Activated CD8-positive, alpha-beta T cell treated with anti-CD3 and anti-CD28 coated beads for 36 hours (primary cell): ENCODE measurements at regions of chr12 and their contacts with region 1.

Region 1: GRCh38 chr12:52879394-52880351 is 25.2 kb downstream of the KRT8 start:
- DNase-seq: peak; percentile 82
- ATAC-seq: peak; percentile 95
- H3K4me3 Mint-ChIP-seq: peak overlapping the region; percentile 54
- H3K27ac Mint-ChIP-seq: no peak overlapping the region
- H3K4me1 Mint-ChIP-seq: peaks cover 5% of the 10 kb centered on the region
- H3K27me3 Mint-ChIP-seq: peaks cover 6% of the 10 kb centered on the region
- CTCF ChIP-seq: peak; percentile 92

Region 2: DNA sequence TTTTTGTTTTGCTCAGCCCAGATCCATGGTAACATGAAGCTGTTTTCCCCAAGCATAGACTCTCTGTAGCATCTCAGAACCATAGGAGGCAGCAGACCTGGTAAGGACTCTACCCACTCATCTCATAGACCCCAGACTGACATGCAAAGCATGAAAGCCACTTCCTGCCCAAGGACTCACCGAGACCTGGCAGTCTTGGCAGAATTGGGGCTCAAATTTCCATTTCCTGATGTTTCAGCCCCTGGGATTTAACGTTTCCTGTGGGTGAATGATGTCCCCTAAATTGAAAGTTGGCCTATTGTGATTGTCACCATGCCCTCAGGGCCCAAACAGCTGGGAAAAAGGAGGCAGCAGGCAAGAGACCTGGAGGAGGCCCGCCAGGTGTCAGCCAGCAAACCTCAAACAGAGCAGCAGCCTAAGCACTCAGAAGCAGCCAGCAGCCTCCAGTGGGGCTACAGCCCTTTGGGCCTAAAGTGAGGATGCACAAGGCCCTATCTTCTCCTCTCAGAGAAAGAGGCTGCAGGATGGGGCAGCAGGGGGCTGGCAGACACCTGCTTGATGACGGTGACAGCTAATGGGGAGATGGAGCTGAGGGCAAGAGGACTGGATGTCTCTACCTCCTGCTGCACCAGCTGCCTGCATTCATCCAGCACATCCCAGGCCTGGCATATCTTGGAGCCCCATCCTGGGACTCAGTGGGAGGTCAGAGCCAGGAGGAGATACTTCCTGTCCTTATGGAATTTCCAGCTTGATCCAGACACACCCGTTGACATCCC is 520.9 kb before region 1 on chr12:
- CTCF ChIA-PET with region 1: interaction called, 10 read pairs
- POLR2A ChIA-PET with region 1: no interaction called
- intact Hi-C with region 1: no loop called
- DNase-seq: peak; percentile 64
- ATAC-seq: peak; percentile 97
- H3K4me3 Mint-ChIP-seq: no peak overlapping the region
- H3K27ac Mint-ChIP-seq: no peak overlapping the region
- H3K4me1 Mint-ChIP-seq: peaks cover 24% of the 10 kb centered on the region
- H3K27me3 Mint-ChIP-seq: no peaks in the 10 kb centered on the region
- CTCF ChIP-seq: no peak

Region 3: DNA sequence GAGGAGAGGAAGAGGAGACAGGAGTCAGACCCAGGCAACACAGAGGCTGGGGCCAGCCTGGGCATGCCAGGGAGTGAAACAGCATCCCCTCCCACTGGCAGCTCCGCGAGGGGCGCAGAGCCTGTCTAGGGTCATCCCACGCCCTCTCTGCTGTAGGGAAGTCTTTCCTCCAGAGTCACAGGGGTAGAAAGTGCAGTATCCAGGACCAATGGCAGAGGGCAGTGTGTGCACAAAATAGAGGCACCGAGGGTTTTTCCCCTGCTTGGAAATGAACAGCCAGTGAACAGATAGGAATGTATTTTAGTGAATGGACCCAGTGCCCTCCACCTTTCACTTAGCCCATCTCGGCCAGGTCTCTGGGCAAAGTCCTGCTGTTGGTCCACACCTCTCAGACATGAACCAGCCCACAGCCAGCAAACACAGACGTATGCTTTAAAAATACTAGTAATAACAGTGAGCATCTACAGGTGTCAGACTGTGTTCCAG is 296.7 kb before region 1 on chr12:
- CTCF ChIA-PET with region 1: interaction called, 325 read pairs
- POLR2A ChIA-PET with region 1: no interaction called
- intact Hi-C with region 1: no loop called
- DNase-seq: peak; percentile 82
- ATAC-seq: peak; percentile 83
- H3K4me3 Mint-ChIP-seq: no peak overlapping the region
- H3K27ac Mint-ChIP-seq: no peak overlapping the region
- H3K4me1 Mint-ChIP-seq: peaks cover 34% of the 10 kb centered on the region
- H3K27me3 Mint-ChIP-seq: no peaks in the 10 kb centered on the region
- CTCF ChIP-seq: peak; percentile 77

Region 4: GRCh38 chr12:52790427-52791270 is 89.0 kb before region 1 on chr12:
- CTCF ChIA-PET with region 1: interaction called, 11 read pairs
- POLR2A ChIA-PET with region 1: no interaction called
- intact Hi-C with region 1: no loop called
- DNase-seq: no peak
- ATAC-seq: no peak
- H3K4me3 Mint-ChIP-seq: no peak overlapping the region
- H3K27ac Mint-ChIP-seq: no peak overlapping the region
- H3K4me1 Mint-ChIP-seq: peaks cover 19% of the 10 kb centered on the region
- H3K27me3 Mint-ChIP-seq: peaks cover 25% of the 10 kb centered on the region
- CTCF ChIP-seq: no peak

Region 5: GRCh38 chr12:52910248-52910883 is 30.7 kb after region 1 on chr12:
- CTCF ChIA-PET with region 1: interaction called, 41 read pairs
- POLR2A ChIA-PET with region 1: interaction called, 3 read pairs
- intact Hi-C with region 1: no loop called
- DNase-seq: no peak
- ATAC-seq: no peak
- H3K4me3 Mint-ChIP-seq: no peak overlapping the region
- H3K27ac Mint-ChIP-seq: no peak overlapping the region
- H3K4me1 Mint-ChIP-seq: no peaks in the 10 kb centered on the region
- H3K27me3 Mint-ChIP-seq: peaks cover 2% of the 10 kb centered on the region
- CTCF ChIP-seq: no peak

Region 6: DNA sequence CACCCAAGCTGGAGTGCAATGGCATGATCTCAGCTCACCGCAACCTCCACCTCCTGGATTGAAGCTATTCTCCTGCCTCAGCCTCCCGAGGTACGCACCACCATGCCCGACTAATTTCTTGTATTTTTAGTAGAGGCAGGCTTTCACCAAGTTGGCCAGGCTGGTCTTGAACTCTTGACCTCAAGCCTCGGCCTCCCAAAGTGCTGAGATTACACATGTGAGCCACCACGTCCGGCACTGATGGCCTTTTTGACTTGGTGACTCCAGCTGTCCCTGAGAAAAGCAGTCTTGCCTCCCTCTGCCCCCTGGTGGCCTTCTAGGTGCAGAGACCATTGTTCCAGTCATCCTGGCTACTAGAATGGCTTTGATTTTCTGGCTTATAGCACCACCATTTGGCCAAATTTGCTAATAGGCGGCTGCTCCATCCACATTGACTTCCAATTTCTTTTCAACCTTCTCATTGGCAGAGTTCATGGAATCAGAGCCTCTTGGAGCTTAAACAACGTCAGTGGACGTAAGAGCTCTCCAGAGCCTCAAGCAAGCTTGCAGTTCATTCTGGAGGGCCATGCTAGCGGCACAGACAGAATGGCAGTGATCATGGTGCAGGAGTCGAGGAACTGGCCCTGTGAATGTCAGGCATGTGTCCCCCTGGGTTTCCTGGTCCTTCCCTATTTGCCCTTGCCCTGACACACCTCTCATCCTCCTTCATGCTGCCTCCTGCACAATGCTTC is 101.2 kb after region 1 on chr12:
- CTCF ChIA-PET with region 1: interaction called, 552 read pairs
- POLR2A ChIA-PET with region 1: interaction called, 5 read pairs
- intact Hi-C with region 1: loop called (anchors 1 kb)
- DNase-seq: peak; percentile 93
- ATAC-seq: peak; percentile 95
- H3K4me3 Mint-ChIP-seq: no peak overlapping the region
- H3K27ac Mint-ChIP-seq: no peak overlapping the region
- H3K4me1 Mint-ChIP-seq: no peaks in the 10 kb centered on the region
- H3K27me3 Mint-ChIP-seq: peaks cover 27% of the 10 kb centered on the region
- CTCF ChIP-seq: peak; percentile 97

Region 7: GRCh38 chr12:53011887-53012286 is 132.2 kb after region 1 on chr12:
- CTCF ChIA-PET with region 1: no interaction called
- POLR2A ChIA-PET with region 1: no interaction called
- intact Hi-C with region 1: no loop called
- DNase-seq: no peak
- ATAC-seq: no peak
- H3K4me3 Mint-ChIP-seq: peak overlapping the region; percentile 27
- H3K27ac Mint-ChIP-seq: peak overlapping the region; percentile 67
- H3K4me1 Mint-ChIP-seq: peaks cover 63% of the 10 kb centered on the region
- H3K27me3 Mint-ChIP-seq: no peaks in the 10 kb centered on the region
- CTCF ChIP-seq: no peak